ENCODE measurements at regions of chr11 and their contacts with region 1.

Region 1: DNA sequence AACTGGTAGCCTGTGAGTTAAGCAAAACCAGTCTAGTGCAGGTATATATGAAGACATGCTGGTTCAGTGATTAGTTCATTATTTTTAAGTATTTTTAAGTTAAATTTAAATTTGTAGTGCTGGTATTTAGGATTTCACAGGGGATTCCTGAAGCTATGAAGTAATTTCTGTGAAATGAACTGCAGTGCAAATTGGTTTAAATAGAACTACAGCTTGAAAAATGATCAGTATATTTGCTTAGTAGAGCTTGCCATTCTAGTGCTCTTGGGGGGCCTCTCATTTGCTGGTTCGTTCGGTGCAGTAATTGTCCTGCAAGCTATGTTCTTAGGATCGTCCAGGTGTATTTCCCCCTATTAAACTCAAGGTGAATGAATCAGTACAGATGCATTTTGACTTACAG is 13.1 kb downstream of the REXO2 start:
- DNase-seq: no peak
- CTCF ChIP-seq: no peak

Region 2: GRCh38 chr11:113956986-113957385 is 495.4 kb before region 1 on chr11:
- CTCF ChIA-PET with region 1: no interaction called
- POLR2A ChIA-PET with region 1: no interaction called
- DNase-seq: no peak
- CTCF ChIP-seq: no peak

Region 3: GRCh38 chr11:114441921-114442320 is 10.5 kb before region 1 on chr11:
- CTCF ChIA-PET with region 1: interaction called, 10 read pairs
- POLR2A ChIA-PET with region 1: no interaction called
- DNase-seq: no peak
- CTCF ChIP-seq: no peak

Measured in GM10248 (cell line).